ENCODE measurements at regions of chr16 and their contacts with region 1.

Region 1: DNA sequence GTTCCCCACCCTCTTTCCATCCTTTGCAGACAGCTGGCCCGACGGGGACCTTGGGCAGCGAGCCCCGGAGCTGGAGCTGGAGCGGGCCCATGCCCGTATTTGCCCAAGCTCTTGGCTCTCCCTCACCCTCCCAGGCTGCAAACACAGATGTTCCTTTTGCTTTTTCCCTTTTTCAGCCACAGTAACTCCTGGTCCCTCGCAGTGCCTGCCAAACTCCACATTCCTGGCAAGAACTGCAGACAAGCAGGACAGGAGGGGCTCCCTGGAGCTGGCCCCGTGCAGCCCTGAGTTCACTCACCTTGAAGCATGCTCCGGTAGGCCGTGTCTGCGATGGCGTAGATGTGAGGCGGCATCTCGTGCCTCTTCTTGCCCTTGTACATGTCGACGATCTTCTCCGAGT is 33.9 kb downstream of the MYH11 start:
- DNase-seq: no peak
- H3K4me3 ChIP-seq: no peak overlapping the region
- H3K27ac ChIP-seq: no peak overlapping the region
- H3K4me1 ChIP-seq: no peaks in the 10 kb centered on the region
- H3K27me3 ChIP-seq: no peaks in the 10 kb centered on the region
- CTCF ChIP-seq: no peak

Region 2: GRCh38 chr16:15757630-15758251 is 65.2 kb before region 1 on chr16:
- CTCF ChIA-PET with region 1: no interaction called
- dilution Hi-C with region 1: no loop called
- in situ Hi-C with region 1: no loop called
- intact Hi-C with region 1: no loop called
- DNase-seq: no peak
- H3K4me3 ChIP-seq: no peak overlapping the region
- H3K27ac ChIP-seq: no peak overlapping the region
- H3K4me1 ChIP-seq: no peaks in the 10 kb centered on the region
- H3K27me3 ChIP-seq: no peaks in the 10 kb centered on the region
- CTCF ChIP-seq: no peak

Region 3: GRCh38 chr16:15782573-15783365 is 40.2 kb before region 1 on chr16:
- CTCF ChIA-PET with region 1: interaction called, 4 read pairs
- dilution Hi-C with region 1: loop called (anchors 5 kb)
- in situ Hi-C with region 1: loop called in 1 of 2 experiments (anchors 5 kb)
- intact Hi-C with region 1: no loop called
- DNase-seq: no peak
- H3K4me3 ChIP-seq: no peak overlapping the region
- H3K27ac ChIP-seq: no peak overlapping the region
- H3K4me1 ChIP-seq: no peaks in the 10 kb centered on the region
- H3K27me3 ChIP-seq: no peaks in the 10 kb centered on the region
- CTCF ChIP-seq: no peak

Region 4: GRCh38 chr16:15807603-15808009 is 15.4 kb before region 1 on chr16:
- CTCF ChIA-PET with region 1: no interaction called
- dilution Hi-C with region 1: no loop called
- in situ Hi-C with region 1: no loop called
- intact Hi-C with region 1: no loop called
- DNase-seq: no peak
- H3K4me3 ChIP-seq: no peak overlapping the region
- H3K27ac ChIP-seq: no peak overlapping the region
- H3K4me1 ChIP-seq: peaks cover 7% of the 10 kb centered on the region
- H3K27me3 ChIP-seq: no peaks in the 10 kb centered on the region
- CTCF ChIP-seq: no peak